AG04450 (cell line): ENCODE measurements at regions of chr1 and their contacts with region 1.

Region 1: GRCh38 chr1:161098210-161099068 is at the start of gene KLHDC9:
- DNase-seq: no peak
- H3K4me3 ChIP-seq: peak within 1 kb of the TSS; percentile 52
- H3K27ac ChIP-seq: peak within 1 kb of the TSS; percentile 11
- H3K27me3 ChIP-seq: peaks cover 2% of the 10 kb centered on the region
- CTCF ChIP-seq: no peak; the same call in 1 of the 2 replicates
- polyA plus RNA-seq, gene KLHDC9: 1.1 and 1.6 TPM in 2 replicates

Region 2: DNA sequence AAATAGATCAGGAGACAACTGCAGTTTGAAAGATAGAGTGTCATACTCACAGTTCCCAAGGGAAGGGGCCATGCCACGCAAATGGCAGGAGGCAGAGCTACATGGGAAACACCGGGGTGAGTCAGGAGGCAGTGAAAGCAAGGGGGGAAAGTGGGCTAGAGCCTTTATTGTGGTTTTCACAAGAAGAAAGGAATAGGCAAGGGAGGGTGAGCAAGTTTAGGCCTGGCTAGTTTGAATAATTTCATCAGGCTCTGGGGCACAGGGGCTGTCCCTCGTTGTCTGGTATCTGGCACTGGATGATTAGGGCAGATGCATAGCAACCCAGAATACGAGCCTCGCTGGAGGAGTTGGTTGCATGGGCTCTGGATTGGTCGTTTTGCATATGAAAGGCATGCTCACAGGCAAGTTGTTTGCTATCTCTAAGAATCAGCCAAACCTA is 126.8 kb before region 1 on chr1:
- CTCF ChIA-PET with region 1: no interaction called
- POLR2A ChIA-PET with region 1: no interaction called
- DNase-seq: no peak
- H3K4me3 ChIP-seq: no peak overlapping the region
- H3K27ac ChIP-seq: no peak overlapping the region
- H3K27me3 ChIP-seq: no peaks in the 10 kb centered on the region
- CTCF ChIP-seq: no peak

Region 3: GRCh38 chr1:160997323-160998038 is 101.0 kb before region 1 on chr1:
- CTCF ChIA-PET with region 1: interaction called, 80 read pairs
- POLR2A ChIA-PET with region 1: interaction called, 7 read pairs
- DNase-seq: no peak
- H3K4me3 ChIP-seq: no peak overlapping the region
- H3K27ac ChIP-seq: no peak overlapping the region
- H3K27me3 ChIP-seq: peaks cover 3% of the 10 kb centered on the region
- CTCF ChIP-seq: peak; percentile 82

Region 4: GRCh38 chr1:161039546-161039945 is 58.9 kb before region 1 on chr1:
- CTCF ChIA-PET with region 1: interaction called, 44 read pairs
- POLR2A ChIA-PET with region 1: interaction called, 3 read pairs
- DNase-seq: no peak
- H3K4me3 ChIP-seq: no peak overlapping the region
- H3K27ac ChIP-seq: no peak overlapping the region
- H3K27me3 ChIP-seq: no peaks in the 10 kb centered on the region
- CTCF ChIP-seq: no peak

Region 5: GRCh38 chr1:161045750-161046571 is 52.5 kb before region 1 on chr1 and contains the start of gene USF1:
- CTCF ChIA-PET with region 1: interaction called, 44 read pairs
- POLR2A ChIA-PET with region 1: interaction called, 4 read pairs
- DNase-seq: peak; percentile 87
- H3K4me3 ChIP-seq: peak within 1 kb of the TSS; percentile 86
- H3K27ac ChIP-seq: peak within 1 kb of the TSS; percentile 95
- H3K27me3 ChIP-seq: no peaks in the 10 kb centered on the region
- CTCF ChIP-seq: no peak
- polyA plus RNA-seq, gene USF1: 32.6 and 37.6 TPM in 2 replicates

Region 6: DNA sequence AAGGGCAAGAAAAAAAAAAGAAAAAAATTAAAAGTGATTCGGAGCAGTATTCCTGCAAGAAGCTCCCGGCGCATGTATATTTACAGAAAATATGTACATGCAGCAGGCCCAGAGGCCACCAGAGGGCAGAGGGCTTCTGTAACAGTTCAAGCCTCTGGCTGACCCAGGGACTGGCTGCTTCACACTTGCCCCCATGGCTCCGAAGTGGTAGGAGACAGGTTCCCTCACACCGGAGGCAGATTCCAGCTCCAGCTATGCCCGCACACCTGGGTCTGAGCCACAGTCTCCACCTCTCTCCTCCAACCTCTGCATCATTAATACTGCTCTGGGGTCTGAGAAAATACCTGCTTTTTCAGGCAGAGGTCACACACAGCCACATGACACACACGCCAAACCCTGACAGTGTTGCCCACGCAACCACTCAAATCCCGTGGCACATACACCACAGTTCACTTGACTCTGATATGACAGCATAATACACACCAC is 26.5 kb before region 1 on chr1:
- CTCF ChIA-PET with region 1: interaction called, 35 read pairs
- POLR2A ChIA-PET with region 1: no interaction called
- DNase-seq: no peak
- H3K4me3 ChIP-seq: no peak overlapping the region
- H3K27ac ChIP-seq: no peak overlapping the region
- H3K27me3 ChIP-seq: peaks cover 4% of the 10 kb centered on the region
- CTCF ChIP-seq: peak; percentile 52

Region 7: DNA sequence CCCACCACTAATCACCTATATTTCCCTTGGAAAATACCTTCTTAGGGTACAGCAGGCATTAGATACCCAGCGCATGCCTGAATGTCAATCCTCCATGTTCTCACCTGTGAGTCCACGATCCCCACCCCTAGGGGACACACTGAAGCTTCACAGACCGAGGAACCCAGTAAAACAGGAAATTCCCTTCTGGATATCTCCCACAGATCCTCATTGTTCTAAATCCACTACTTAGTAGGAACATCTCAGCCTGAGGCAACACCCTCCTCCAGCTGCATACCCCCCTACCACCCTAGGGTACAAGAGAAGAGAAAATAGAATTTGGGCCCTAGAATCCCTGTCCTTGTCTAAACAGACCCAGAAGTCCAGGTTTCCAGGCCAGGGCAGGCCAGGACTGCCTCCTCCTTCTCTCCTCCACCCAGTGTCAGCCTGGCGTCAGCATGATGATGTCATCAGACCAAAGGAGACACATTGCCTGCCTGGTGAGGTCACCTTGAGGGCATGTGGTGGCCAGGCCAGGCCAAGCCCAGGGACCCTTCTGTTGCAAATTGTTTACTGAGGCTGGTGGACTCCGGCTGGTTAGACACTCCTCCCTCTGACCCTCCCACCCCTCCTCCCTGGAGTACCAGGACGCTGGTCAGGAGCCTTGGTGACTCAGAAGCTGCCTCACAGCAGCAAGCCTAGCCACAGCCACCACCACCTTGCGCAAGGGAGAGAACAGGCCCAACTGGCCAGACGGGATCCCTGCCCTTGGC is 15.3 kb before region 1 on chr1:
- CTCF ChIA-PET with region 1: interaction called, 16 read pairs
- POLR2A ChIA-PET with region 1: no interaction called
- DNase-seq: peak; percentile 51
- H3K4me3 ChIP-seq: no peak overlapping the region
- H3K27ac ChIP-seq: peak overlapping the region; percentile 70
- H3K27me3 ChIP-seq: no peaks in the 10 kb centered on the region
- CTCF ChIP-seq: no peak

Region 8: DNA sequence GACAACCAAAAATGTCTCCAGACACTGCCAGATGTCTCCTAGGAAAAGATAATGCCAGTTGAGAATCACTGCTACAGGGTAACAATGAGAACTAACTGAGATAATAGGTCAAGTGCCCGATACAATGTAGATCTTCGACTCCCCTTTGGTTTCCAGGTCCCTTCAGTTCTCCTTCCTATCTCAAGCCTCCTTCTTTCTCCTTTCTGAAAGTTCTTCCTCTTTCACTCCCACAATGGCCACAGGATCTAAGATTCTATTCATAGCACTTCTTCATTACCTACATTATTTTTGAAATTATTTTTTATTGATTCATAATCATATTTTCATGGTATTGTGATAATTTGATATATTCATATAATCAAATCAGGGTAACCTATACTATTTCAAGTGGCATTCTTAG is 13.1 kb after region 1 on chr1:
- CTCF ChIA-PET with region 1: interaction called, 23 read pairs
- POLR2A ChIA-PET with region 1: interaction called, 3 read pairs
- DNase-seq: no peak
- H3K4me3 ChIP-seq: no peak overlapping the region
- H3K27ac ChIP-seq: no peak overlapping the region
- H3K27me3 ChIP-seq: no peaks in the 10 kb centered on the region
- CTCF ChIP-seq: no peak